Left cardiac atrium (tissue), 4 donors: ENCODE measurements at regions of chr12 and their contacts with region 1.

Region 1: GRCh38 chr12:98397316-98398105 is 117.9 kb upstream of the TMPO start:
- DNase-seq: peak; percentile 83
- ATAC-seq: peak; percentile 96 to 98

Region 2: DNA sequence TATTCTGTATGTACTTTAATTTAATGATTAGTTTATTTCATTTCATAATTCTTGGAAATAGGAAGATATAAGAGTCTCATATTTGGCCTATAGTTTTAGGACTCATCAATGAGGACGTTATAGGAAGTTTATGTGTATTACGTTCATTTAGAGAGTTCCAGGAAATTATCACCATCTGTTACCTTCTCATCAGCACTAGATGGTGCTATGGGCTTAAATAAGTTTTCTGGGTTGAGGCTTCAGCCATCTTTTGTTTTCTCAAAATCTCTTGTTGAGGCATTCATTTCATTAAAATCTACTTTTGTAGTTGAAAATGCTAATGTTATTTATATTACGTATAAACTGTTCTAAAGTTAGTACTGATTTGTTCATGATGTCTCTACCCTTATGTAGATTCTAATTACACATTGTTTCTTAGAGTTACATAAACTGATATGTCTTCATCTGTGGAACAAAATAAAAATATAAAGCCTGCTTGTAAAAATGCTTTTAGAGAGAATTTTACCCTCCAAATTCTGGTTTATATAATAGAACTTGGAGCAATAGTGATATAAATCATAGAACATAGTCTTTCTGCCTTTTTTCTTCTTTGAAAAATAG is 1818.9 kb before region 1 on chr12:
- intact Hi-C with region 1: loop called in 1 of 2 experiments (anchors 2 kb)
- DNase-seq: no peak
- ATAC-seq: peak in 1 of 2 donors; percentile 49

Region 3: GRCh38 chr12:98073593-98073992 is 323.9 kb before region 1 on chr12:
- intact Hi-C with region 1: no loop called
- DNase-seq: no peak
- ATAC-seq: no peak